Heart right ventricle (tissue), 16 donors: ENCODE measurements at regions of chr1 and their contacts with region 1.

Region 1: GRCh38 chr1:109548321-109549267 is at the start of gene GNAI3:
- DNase-seq: peak; percentile 95 to 97
- ATAC-seq: peak; percentile 96 to 99 (median 98)
- H3K4me3 ChIP-seq: peak within 1 kb of the TSS; percentile 69 to 96 (median 88)
- H3K27ac ChIP-seq: peak within 1 kb of the TSS; percentile 61 to 98 (median 95)
- H3K4me1 ChIP-seq: peaks cover 0 to 62% (median 46%) of the 10 kb centered on the region in 9 donors
- H3K27me3 ChIP-seq: no peaks in the 10 kb centered on the region
- CTCF ChIP-seq: no peak
- total RNA-seq, gene GNAI3: 2.1 to 3.6 (median 2.8) TPM

Region 2: DNA sequence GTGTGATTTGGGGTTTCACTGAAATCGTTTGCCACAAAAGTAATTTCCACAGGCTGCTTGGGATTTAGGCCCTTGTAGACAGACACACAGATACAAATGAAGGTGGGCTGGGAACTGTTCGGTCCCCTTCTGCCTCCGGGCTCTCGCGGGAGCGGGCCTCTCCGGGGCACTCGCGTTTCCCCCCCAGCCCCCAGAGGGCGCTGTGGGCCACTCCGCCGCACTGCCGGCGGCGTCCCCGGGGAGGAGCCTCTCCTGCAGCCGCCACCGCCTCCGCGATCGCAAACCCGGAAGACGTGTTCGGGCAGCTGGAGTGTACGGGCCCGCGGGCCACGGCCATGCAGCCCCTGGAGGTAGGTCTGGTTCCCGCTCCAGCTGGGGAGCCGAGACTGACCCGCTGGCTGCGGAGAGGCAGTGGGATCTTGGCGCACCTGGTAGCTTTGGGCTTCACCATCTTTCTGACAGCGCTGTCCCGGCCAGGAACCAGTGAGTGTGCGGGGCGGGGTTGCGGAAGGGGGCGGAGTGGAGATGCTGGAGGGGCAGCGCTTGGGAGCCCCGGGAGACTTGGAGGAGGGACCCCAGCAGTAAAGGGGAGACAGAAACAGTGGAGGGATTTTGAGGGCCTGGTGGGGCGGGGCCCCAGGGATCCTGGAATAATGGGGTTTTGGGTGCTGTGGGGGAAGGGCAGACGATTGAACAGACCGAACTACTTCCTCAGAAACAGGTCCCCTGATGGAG is 54.6 kb before region 1 on chr1 and contains the start of gene CYB561D1:
- intact Hi-C with region 1: no loop called
- DNase-seq: peak; percentile 85 to 91
- ATAC-seq: peak; percentile 88 to 95 (median 93)
- H3K4me3 ChIP-seq: peak within 1 kb of the TSS; percentile 56 to 98 (median 86)
- H3K27ac ChIP-seq: peak within 1 kb of the TSS in 9 of 10 donors; percentile 46 to 92 (median 79)
- H3K4me1 ChIP-seq: peaks cover 0 to 42% (median 21%) of the 10 kb centered on the region in 9 donors
- H3K27me3 ChIP-seq: no peaks in the 10 kb centered on the region
- CTCF ChIP-seq: peak; percentile 92 to 100 (median 97)
- total RNA-seq, gene CYB561D1: 3.3 to 7.6 (median 4.5) TPM

Region 3: DNA sequence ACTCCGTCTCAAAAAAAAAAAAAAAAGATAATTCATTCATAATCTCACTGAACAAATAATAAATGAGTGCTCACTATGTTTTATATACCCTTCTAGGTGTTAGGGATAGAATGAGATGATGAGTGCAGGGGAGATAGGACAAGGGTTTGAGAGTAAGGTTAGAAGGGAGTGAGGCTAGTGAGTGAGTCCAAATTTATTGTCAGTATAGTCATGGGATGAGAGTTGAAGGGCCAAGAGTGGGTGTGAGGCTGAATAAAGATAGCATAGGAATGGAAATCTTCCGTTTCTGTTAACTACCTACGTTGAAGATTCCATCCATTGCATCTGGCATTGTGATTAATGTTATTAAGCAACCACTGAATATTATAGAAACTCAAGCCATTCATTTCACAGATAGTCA is 16.6 kb after region 1 on chr1:
- intact Hi-C with region 1: loop called in 1 of 10 experiments (anchors 1 kb)
- DNase-seq: no peak
- ATAC-seq: peak in 1 of 8 donors; percentile 21
- H3K4me3 ChIP-seq: no peak overlapping the region
- H3K27ac ChIP-seq: no peak overlapping the region
- H3K4me1 ChIP-seq: peaks cover 0 to 98% (median 92%) of the 10 kb centered on the region in 9 donors
- H3K27me3 ChIP-seq: no peaks in the 10 kb centered on the region
- CTCF ChIP-seq: no peak

Region 4: DNA sequence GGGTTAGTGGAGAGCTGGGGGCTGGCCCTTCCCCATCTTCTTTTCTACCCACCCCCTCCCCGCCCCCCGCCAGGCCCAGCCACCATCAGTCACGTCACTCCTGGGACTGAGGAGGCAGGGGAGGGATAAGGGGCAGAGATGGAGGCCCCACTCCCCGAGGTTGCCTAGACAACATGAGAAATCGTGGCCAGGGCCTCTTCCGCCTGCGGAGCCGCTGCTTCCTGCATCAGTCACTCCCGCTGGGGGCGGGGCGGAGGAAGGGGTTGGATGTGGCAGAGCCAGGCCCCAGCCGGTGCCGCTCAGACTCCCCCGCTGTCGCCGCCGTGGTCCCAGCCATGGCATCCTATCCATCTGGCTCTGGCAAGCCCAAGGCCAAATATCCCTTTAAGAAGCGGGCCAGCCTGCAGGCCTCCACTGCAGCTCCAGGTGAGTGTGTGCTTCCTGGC is 72.3 kb after region 1 on chr1:
- intact Hi-C with region 1: loop called in 5 of 10 experiments (anchors 5 kb)
- DNase-seq: peak; percentile 93 to 94
- ATAC-seq: peak; percentile 75 to 90 (median 84)
- H3K4me3 ChIP-seq: peak overlapping the region; percentile 45 to 77 (median 72)
- H3K27ac ChIP-seq: peak overlapping the region; percentile 1 to 97 (median 84)
- H3K4me1 ChIP-seq: peaks cover 9 to 77% (median 57%) of the 10 kb centered on the region in 9 donors
- H3K27me3 ChIP-seq: no peaks in the 10 kb centered on the region
- CTCF ChIP-seq: no peak

Region 5: DNA sequence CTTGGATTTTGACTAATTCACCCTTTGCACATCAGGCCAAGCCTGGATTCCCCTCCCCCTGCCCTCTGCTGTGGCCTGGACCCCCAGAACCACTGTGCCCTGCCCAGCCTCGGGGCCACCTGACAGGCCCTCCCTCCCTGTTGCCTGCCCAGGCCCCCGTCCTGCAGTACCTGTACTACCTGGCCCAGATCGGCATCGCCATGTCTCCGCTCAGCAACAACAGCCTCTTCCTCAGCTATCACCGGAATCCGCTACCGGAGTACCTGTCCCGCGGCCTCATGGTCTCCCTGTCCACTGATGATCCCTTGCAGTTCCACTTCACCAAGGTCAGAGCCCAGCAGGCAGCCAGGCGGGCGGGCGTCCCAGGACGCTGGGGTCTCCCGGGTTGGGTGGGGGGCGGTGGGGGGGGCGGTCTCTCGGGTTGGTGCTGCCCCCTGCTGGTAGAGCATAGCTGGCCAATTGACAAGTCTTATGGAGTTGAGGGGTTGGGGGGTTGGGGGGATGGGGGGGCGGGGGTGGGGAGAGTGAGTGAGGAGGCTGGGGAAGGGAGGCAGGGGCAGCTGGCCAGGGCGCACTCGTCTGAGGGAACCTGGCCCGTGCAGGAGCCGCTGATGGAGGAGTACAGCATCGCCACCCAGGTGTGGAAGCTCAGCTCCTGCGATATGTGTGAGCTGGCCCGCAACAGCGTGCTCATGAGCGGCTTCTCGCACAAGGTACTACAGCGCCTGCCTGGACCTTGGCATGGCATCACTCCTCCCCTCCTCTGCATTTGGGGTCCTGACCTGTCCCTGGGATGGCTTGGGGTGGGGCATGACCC is 81.7 kb after region 1 on chr1:
- intact Hi-C with region 1: loop called in 8 of 10 experiments (anchors 2 to 5 kb)
- DNase-seq: no peak
- ATAC-seq: peak in 1 of 8 donors; percentile 11
- H3K4me3 ChIP-seq: no peak overlapping the region
- H3K27ac ChIP-seq: no peak overlapping the region
- H3K4me1 ChIP-seq: peaks cover 0 to 16% (median 0%) of the 10 kb centered on the region in 9 donors
- H3K27me3 ChIP-seq: no peaks in the 10 kb centered on the region
- CTCF ChIP-seq: peak; percentile 14 to 50 (median 36)

Region 6: GRCh38 chr1:109643385-109644230 is 95.0 kb after region 1 on chr1:
- intact Hi-C with region 1: loop called in 3 of 10 experiments (anchors 5 kb)
- DNase-seq: peak; percentile 81 to 90
- ATAC-seq: peak; percentile 71 to 94 (median 89)
- H3K4me3 ChIP-seq: peak overlapping the region in 1 of 10 donors; percentile 7
- H3K27ac ChIP-seq: no peak overlapping the region
- H3K4me1 ChIP-seq: peaks cover 0 to 12% (median 6%) of the 10 kb centered on the region in 9 donors
- H3K27me3 ChIP-seq: no peaks in the 10 kb centered on the region
- CTCF ChIP-seq: peak; percentile 75 to 93 (median 88)